WTC11 (cell line): ENCODE measurements at regions of chr9 and their contacts with region 1.

Region 1: GRCh38 chr9:89978170-89978569 is 373.4 kb downstream of the GADD45G start:
- DNase-seq: no peak
- ATAC-seq: peak; percentile 82
- H3K4me3 Mint-ChIP-seq: no peak overlapping the region
- H3K27ac Mint-ChIP-seq: no peak overlapping the region
- H3K4me1 Mint-ChIP-seq: peaks cover 6% of the 10 kb centered on the region; the same call in 1 of the 2 replicates
- H3K27me3 Mint-ChIP-seq: no peaks in the 10 kb centered on the region; the same call in 1 of the 2 replicates
- CTCF ChIP-seq: no peak

Region 2: GRCh38 chr9:89992306-89993198 is 14.4 kb after region 1 on chr9:
- CTCF ChIA-PET with region 1: interaction called, 11 read pairs
- POLR2A ChIA-PET with region 1: no interaction called
- DNase-seq: no peak
- ATAC-seq: no peak
- H3K4me3 Mint-ChIP-seq: no peak overlapping the region
- H3K27ac Mint-ChIP-seq: no peak overlapping the region
- H3K4me1 Mint-ChIP-seq: peaks cover 10% of the 10 kb centered on the region; the same call in 1 of the 2 replicates
- H3K27me3 Mint-ChIP-seq: no peaks in the 10 kb centered on the region; the same call in 1 of the 2 replicates
- CTCF ChIP-seq: no peak